Body of pancreas (tissue), 4 donors: ENCODE measurements at regions of chr12 and their contacts with region 1.

Region 1: DNA sequence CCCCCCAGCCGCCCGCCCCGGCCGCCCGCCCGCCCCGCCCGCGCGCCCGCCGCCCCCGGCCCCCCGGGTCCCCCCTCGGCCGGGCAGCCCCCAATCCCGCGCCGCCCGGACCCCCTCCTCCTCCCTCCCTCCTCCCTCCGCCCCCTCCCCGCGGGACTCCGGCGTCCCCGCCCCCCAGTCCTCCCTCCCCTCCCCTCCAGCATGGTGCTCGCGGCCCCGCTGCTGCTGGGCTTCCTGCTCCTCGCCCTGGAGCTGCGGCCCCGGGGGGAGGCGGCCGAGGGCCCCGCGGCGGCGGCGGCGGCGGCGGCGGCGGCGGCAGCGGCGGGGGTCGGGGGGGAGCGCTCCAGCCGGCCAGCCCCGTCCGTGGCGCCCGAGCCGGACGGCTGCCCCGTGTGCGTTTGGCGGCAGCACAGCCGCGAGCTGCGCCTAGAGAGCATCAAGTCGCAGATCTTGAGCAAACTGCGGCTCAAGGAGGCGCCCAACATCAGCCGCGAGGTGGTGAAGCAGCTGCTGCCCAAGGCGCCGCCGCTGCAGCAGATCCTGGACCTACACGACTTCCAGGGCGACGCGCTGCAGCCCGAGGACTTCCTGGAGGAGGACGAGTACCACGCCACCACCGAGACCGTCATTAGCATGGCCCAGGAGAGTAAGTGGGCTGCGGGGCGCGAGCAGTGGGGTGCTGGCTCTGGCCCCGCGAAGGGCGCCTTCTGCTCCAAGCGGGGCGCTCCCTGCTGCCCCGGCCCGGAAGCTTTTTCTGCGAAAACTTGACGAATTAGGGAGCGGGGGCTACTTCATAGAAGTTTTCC is at the start of gene GDF11:
- DNase-seq: peak; percentile 46 to 65 (median 62)
- ATAC-seq: peak; percentile 49
- H3K4me3 ChIP-seq: peak within 1 kb of the TSS; percentile 28 to 31
- H3K27ac ChIP-seq: peak within 1 kb of the TSS in 2 of 4 donors; percentile 6 to 32
- H3K4me1 ChIP-seq: peaks cover 27% of the 10 kb centered on the region
- H3K27me3 ChIP-seq: no peaks in the 10 kb centered on the region
- CTCF ChIP-seq: no peak
- POLR2A ChIP-seq: peak in 1 of 3 donors; percentile 8
- total RNA-seq, gene GDF11: 0.33 to 0.78 TPM

Region 2: DNA sequence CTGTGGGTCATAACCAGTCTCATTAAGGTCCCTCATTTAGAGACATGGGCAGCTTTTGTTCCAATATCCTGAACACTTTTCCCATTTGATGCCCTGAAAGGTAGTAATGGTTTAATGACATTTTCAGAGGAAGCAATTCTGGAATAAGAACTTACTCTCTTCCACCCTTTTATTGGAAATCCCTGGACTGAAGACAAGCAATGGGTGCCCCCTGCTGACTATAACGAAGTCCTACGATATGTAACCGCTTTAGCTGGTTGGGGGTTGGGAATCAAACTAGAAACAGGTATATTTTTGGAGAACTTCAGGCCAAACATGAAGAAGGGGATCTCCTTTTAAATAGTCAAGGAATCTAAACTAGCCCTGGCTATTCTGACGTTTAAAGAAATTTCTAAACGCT is 53.7 kb after region 1 on chr12:
- intact Hi-C with region 1: no loop called
- DNase-seq: peak in 2 of 4 donors; percentile 27 to 34
- ATAC-seq: no peak
- H3K4me3 ChIP-seq: no peak overlapping the region
- H3K27ac ChIP-seq: no peak overlapping the region
- H3K4me1 ChIP-seq: no peaks in the 10 kb centered on the region
- H3K27me3 ChIP-seq: no peaks in the 10 kb centered on the region
- CTCF ChIP-seq: peak in 5 of 7 experiments; percentile 19 to 50 (median 28)
- POLR2A ChIP-seq: no peak

Region 3: GRCh38 chr12:55829967-55830600 is 86.8 kb after region 1 on chr12:
- intact Hi-C with region 1: loop called (anchors 10 kb)
- DNase-seq: peak; percentile 68 to 70 (median 69)
- ATAC-seq: peak; percentile 39
- H3K4me3 ChIP-seq: peak overlapping the region; percentile 69 to 72
- H3K27ac ChIP-seq: peak overlapping the region; percentile 81 to 89 (median 88)
- H3K4me1 ChIP-seq: peaks cover 58% of the 10 kb centered on the region
- H3K27me3 ChIP-seq: no peaks in the 10 kb centered on the region
- CTCF ChIP-seq: no peak
- POLR2A ChIP-seq: no peak

Region 4: DNA sequence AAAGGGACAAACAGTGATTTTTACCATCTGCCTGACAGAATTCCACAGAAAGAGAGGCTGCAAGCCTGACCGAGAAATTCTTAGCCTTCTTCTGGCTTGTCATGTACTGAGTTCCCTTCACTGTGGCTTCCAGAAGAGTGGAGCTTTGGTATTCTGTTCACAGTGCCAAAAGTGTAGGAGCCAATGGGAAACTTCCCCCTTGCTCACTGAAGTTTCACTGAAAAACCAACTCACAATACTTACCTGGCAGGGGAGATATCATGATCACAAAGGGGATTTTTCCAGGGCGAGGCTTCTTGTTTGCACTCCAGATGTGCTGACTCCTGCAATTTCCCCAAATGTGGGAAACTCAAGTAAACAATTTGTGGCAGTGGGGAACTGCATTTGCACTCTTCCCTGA is 131.1 kb after region 1 on chr12:
- intact Hi-C with region 1: no loop called
- DNase-seq: peak in 1 of 4 donors; percentile 2
- ATAC-seq: peak; percentile 33
- H3K4me3 ChIP-seq: no peak overlapping the region
- H3K27ac ChIP-seq: peak overlapping the region in 1 of 4 donors; percentile 6
- H3K4me1 ChIP-seq: no peaks in the 10 kb centered on the region
- H3K27me3 ChIP-seq: no peaks in the 10 kb centered on the region
- CTCF ChIP-seq: no peak
- POLR2A ChIP-seq: no peak

Region 5: GRCh38 chr12:55940065-55940732 is 196.9 kb after region 1 on chr12:
- intact Hi-C with region 1: loop called (anchors 10 kb)
- DNase-seq: peak; percentile 87 to 90 (median 88)
- ATAC-seq: peak; percentile 96
- H3K4me3 ChIP-seq: no peak overlapping the region
- H3K27ac ChIP-seq: peak overlapping the region; percentile 46 to 61 (median 58)
- H3K4me1 ChIP-seq: peaks cover 19% of the 10 kb centered on the region
- H3K27me3 ChIP-seq: no peaks in the 10 kb centered on the region
- CTCF ChIP-seq: peak; percentile 87 to 94 (median 91)
- POLR2A ChIP-seq: peak in 1 of 3 donors; percentile 15

Region 6: GRCh38 chr12:56029666-56030293 is 286.5 kb after region 1 on chr12:
- intact Hi-C with region 1: loop called (anchors 10 kb)
- DNase-seq: peak; percentile 51 to 64 (median 56)
- ATAC-seq: peak; percentile 75
- H3K4me3 ChIP-seq: no peak overlapping the region
- H3K27ac ChIP-seq: peak overlapping the region in 1 of 4 donors; percentile 66
- H3K4me1 ChIP-seq: no peaks in the 10 kb centered on the region
- H3K27me3 ChIP-seq: no peaks in the 10 kb centered on the region
- CTCF ChIP-seq: peak; percentile 43 to 74 (median 61)
- POLR2A ChIP-seq: no peak